ENCODE measurements at regions of chr2 and their contacts with region 1.

Region 1: GRCh38 chr2:8681786-8682692 is at the start of gene ID2:
- DNase-seq: peak; percentile 100
- H3K4me3 ChIP-seq: peak within 1 kb of the TSS; percentile 68 to 72
- H3K27ac ChIP-seq: peak within 1 kb of the TSS; percentile 99 to 100
- H3K4me1 ChIP-seq: peaks cover 0 to 21% (median 13%) of the 10 kb centered on the region in 4 donors
- H3K27me3 ChIP-seq: no peaks in the 10 kb centered on the region
- CTCF ChIP-seq: peak in 1 of 2 experiments; percentile 23

Region 2: DNA sequence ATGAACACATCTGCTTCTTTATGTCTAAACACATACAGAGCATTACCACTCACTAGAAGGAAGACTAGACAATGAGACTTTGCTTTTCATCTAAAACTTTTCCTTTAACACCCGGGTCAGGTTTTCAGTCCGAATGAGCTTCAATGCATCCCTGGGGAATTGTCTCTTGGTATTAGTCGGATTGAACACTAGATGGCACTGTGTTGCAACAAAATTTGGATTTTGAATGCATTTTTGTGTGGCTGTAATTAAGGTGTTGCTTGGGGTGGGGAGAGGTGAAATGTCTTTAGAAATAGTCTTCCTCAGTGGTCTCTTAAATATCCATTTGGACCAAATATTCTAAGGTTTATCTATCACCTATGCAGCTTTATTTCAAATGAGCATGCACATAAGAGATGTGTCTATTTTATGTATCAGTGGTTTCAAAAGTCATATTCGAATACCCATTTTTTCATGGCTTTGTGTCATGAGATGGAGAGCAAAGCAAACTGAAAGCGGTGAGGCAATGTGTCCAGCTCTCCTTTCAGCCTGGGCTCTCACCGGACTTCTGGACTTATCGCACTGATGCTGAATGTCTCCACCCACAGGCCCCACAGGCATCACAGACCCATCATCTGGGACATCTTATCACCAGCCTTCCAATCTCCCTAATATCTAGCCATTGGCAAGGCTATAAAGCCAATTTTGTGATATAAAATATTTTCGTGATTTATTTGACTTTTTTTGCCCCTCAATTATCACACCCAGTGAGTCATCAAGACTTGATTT is 1254.6 kb before region 1 on chr2:
- intact Hi-C with region 1: loop called (anchors 2 kb)
- DNase-seq: no peak
- H3K4me3 ChIP-seq: no peak overlapping the region
- H3K27ac ChIP-seq: no peak overlapping the region
- H3K4me1 ChIP-seq: peaks cover 0 to 17% (median 8%) of the 10 kb centered on the region in 4 donors
- H3K27me3 ChIP-seq: peaks cover 0 to 29% of the 10 kb centered on the region in 2 donors
- CTCF ChIP-seq: peak; percentile 70 to 81

Region 3: GRCh38 chr2:8004250-8004681 is 677.8 kb before region 1 on chr2:
- intact Hi-C with region 1: loop called (anchors 5 kb)
- DNase-seq: peak in 1 of 2 donors; percentile 69
- H3K4me3 ChIP-seq: peak overlapping the region; percentile 14 to 33
- H3K27ac ChIP-seq: peak overlapping the region; percentile 68 to 79
- H3K4me1 ChIP-seq: peaks cover 0 to 19% (median 15%) of the 10 kb centered on the region in 4 donors
- H3K27me3 ChIP-seq: no peaks in the 10 kb centered on the region
- CTCF ChIP-seq: no peak

Region 4: DNA sequence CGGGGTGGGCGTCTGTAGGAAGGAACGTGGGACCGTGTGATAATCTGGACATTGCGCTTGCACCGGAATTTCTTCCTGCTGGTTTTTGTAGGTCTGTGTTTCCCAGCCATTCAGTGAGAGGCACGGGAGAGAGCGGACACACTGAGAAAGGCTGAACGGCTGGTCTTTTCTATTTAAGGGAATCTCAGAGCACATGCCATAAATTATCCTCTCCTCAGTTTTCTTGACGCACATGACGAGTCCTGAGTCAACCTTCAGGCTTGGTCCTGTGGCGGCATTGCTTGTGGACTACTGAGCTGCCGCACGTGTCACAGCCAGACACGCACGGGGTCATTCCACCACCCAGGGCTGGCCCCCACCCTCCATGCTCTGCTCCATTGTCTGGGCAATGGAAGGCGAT is 519.5 kb before region 1 on chr2:
- intact Hi-C with region 1: loop called (anchors 5 kb)
- DNase-seq: peak; percentile 58 to 96
- H3K4me3 ChIP-seq: no peak overlapping the region
- H3K27ac ChIP-seq: peak overlapping the region; percentile 83 to 87
- H3K4me1 ChIP-seq: peaks cover 0 to 36% (median 9%) of the 10 kb centered on the region in 4 donors
- H3K27me3 ChIP-seq: no peaks in the 10 kb centered on the region
- CTCF ChIP-seq: no peak

Region 5: GRCh38 chr2:8215159-8215863 is 466.7 kb before region 1 on chr2:
- intact Hi-C with region 1: loop called (anchors 10 kb)
- DNase-seq: no peak
- H3K4me3 ChIP-seq: no peak overlapping the region
- H3K27ac ChIP-seq: peak overlapping the region in 1 of 2 donors; percentile 74
- H3K4me1 ChIP-seq: peaks cover 0 to 34% (median 9%) of the 10 kb centered on the region in 4 donors
- H3K27me3 ChIP-seq: no peaks in the 10 kb centered on the region
- CTCF ChIP-seq: no peak

Region 6: GRCh38 chr2:8247905-8248622 is 434.0 kb before region 1 on chr2:
- intact Hi-C with region 1: loop called (anchors 5 kb)
- DNase-seq: peak; percentile 47 to 84
- H3K4me3 ChIP-seq: peak overlapping the region in 1 of 2 donors; percentile 32
- H3K27ac ChIP-seq: peak overlapping the region; percentile 85 to 89
- H3K4me1 ChIP-seq: peaks cover 0 to 40% (median 20%) of the 10 kb centered on the region in 4 donors
- H3K27me3 ChIP-seq: no peaks in the 10 kb centered on the region
- CTCF ChIP-seq: no peak

Region 7: DNA sequence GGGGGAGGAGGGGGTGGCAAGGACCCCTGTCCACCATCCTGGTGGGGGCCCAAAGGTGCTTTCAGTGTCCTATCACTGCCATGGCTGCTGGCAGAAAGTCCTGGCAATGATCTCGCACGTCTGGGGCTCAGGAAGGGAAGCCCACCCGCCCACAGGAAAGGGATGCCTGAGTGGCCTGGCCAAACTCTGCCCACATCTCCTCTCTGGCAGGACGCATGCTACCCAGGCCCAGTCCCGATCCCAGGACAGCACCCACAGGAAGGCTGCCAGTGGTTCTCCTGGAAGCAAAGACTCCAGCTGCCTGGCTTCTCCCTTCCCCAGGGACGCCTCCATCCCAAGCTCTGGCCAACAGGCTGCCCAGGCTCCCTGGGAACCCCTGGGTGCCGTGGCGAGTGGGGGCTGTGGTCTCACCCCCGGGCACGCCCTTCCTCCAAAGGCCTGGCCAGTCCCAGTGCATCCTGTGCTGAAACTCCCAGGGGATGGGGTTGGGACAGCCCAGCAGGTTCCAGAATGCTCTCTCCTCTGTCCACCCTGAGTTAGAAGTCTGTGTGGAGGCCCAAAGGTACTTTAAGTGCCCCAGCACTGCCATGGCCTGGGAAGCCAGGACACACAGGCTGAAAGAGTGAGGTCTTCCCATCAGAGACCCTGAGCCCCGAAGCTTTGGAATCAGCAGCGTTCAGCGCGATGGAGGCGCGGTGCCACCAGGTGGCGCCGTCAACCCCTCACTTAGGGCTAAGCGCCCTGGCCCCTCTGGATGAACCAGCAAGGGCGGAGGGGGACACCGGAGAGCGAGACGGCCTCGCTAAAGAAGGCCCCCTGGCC is 1131.5 kb after region 1 on chr2:
- intact Hi-C with region 1: loop called (anchors 10 kb)
- DNase-seq: peak; percentile 53 to 77
- H3K4me3 ChIP-seq: peak overlapping the region in 1 of 2 donors; percentile 3
- H3K27ac ChIP-seq: no peak overlapping the region
- H3K4me1 ChIP-seq: peaks cover 0 to 19% (median 12%) of the 10 kb centered on the region in 4 donors
- H3K27me3 ChIP-seq: peaks cover 0 to 9% of the 10 kb centered on the region in 2 donors
- CTCF ChIP-seq: peak; percentile 87 to 93

Measured in tibial artery (tissue), 4 donors.